Esophagus squamous epithelium (tissue), 5 donors: ENCODE measurements at regions of chr11 and their contacts with region 1.

Region 1: GRCh38 chr11:112086422-112087191 is at the starts of genes SDHD and TIMM8B:
- DNase-seq: peak; percentile 81
- H3K4me3 ChIP-seq: peak within 1 kb of the TSS; percentile 37 to 99 (median 85)
- H3K27ac ChIP-seq: peak within 1 kb of the TSS; percentile 84 to 95 (median 88)
- H3K4me1 ChIP-seq: peaks cover 21 to 52% (median 27%) of the 10 kb centered on the region in 3 donors
- H3K27me3 ChIP-seq: no peaks in the 10 kb centered on the region
- CTCF ChIP-seq: peak in 4 of 6 experiments; percentile 27 to 53 (median 44)
- POLR2A ChIP-seq: peak in 3 of 4 donors; percentile 36 to 63 (median 55)
- total RNA-seq, gene SDHD: 78.5 to 155 (median 122) TPM
- total RNA-seq, gene TIMM8B: 43.5 to 65.3 (median 62.1) TPM

Region 2: GRCh38 chr11:111938687-111939160 is 147.9 kb before region 1 on chr11:
- intact Hi-C with region 1: loop called (anchors 10 kb)
- DNase-seq: no peak
- H3K4me3 ChIP-seq: peak overlapping the region in 1 of 4 donors; percentile 27
- H3K27ac ChIP-seq: peak overlapping the region; percentile 18 to 85 (median 76)
- H3K4me1 ChIP-seq: peaks cover 0 to 59% (median 33%) of the 10 kb centered on the region in 3 donors
- H3K27me3 ChIP-seq: no peaks in the 10 kb centered on the region
- CTCF ChIP-seq: no peak
- POLR2A ChIP-seq: no peak

Region 3: GRCh38 chr11:112321521-112322172 is 235.0 kb after region 1 on chr11:
- intact Hi-C with region 1: no loop called
- DNase-seq: no peak
- H3K4me3 ChIP-seq: no peak overlapping the region
- H3K27ac ChIP-seq: peak overlapping the region; percentile 31 to 76 (median 51)
- H3K4me1 ChIP-seq: peaks cover 10 to 38% (median 18%) of the 10 kb centered on the region in 3 donors
- H3K27me3 ChIP-seq: no peaks in the 10 kb centered on the region
- CTCF ChIP-seq: no peak
- POLR2A ChIP-seq: no peak